PC-9 (cell line): ENCODE measurements at regions of chr22 and their contacts with region 1.

Region 1: DNA sequence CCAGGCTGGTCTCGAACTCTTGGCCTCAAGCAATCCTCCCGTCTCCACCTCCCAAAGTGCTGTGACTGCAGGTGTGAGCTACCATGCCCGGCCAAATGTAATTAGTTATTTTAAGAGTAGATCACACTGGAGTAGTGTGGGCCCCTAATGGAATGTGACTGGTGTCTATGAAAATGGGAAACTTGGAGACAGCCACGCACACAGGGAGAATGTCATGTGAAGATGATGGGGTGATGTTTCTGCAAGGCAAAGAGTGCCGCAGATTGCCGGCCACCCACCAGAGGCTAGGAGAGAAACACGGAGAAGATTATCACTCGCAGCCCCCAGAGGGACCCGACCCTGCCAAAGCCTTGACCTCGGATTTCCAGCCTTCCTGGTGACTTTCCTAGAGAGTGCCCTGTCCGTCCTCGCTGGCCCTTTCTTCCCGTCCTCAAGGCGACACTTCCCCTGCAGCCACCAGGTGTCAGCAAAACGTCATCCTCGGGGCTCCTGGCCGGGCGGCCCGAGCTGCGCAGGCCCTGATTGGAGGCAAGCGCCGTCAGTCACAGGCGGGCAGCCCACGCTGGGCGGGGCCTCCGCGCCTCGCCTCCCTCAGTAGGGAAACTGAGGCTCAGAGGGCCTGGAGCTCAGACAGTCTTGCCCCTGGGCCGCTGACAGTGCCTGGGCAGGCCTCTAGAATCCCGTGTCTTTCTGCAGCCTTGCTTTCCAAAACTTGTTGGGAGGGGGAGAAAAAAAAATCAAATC is 16.3 kb downstream of the CRYBB2 start:
- DNase-seq: peak; percentile 63 to 80
- H3K4me3 ChIP-seq: peak overlapping the region; percentile 27; the same call in 1 of the 2 replicates
- H3K27ac ChIP-seq: no peak overlapping the region
- H3K4me1 ChIP-seq: no peaks in the 10 kb centered on the region
- H3K27me3 ChIP-seq: peaks cover 26% of the 10 kb centered on the region
- CTCF ChIP-seq: peak; percentile 81

Region 2: GRCh38 chr22:25350551-25350971 is 114.8 kb after region 1 on chr22:
- CTCF ChIA-PET with region 1: no interaction called
- POLR2A ChIA-PET with region 1: no interaction called
- intact Hi-C with region 1: loop called (anchors 10 kb)
- DNase-seq: no peak
- H3K4me3 ChIP-seq: no peak overlapping the region
- H3K27ac ChIP-seq: no peak overlapping the region
- H3K4me1 ChIP-seq: no peaks in the 10 kb centered on the region
- H3K27me3 ChIP-seq: no peaks in the 10 kb centered on the region
- CTCF ChIP-seq: no peak

Region 3: GRCh38 chr22:25437414-25438160 is 201.9 kb after region 1 on chr22:
- CTCF ChIA-PET with region 1: no interaction called
- POLR2A ChIA-PET with region 1: no interaction called
- intact Hi-C with region 1: no loop called
- DNase-seq: no peak
- H3K4me3 ChIP-seq: no peak overlapping the region
- H3K27ac ChIP-seq: no peak overlapping the region
- H3K4me1 ChIP-seq: no peaks in the 10 kb centered on the region
- H3K27me3 ChIP-seq: no peaks in the 10 kb centered on the region
- CTCF ChIP-seq: no peak

Region 4: DNA sequence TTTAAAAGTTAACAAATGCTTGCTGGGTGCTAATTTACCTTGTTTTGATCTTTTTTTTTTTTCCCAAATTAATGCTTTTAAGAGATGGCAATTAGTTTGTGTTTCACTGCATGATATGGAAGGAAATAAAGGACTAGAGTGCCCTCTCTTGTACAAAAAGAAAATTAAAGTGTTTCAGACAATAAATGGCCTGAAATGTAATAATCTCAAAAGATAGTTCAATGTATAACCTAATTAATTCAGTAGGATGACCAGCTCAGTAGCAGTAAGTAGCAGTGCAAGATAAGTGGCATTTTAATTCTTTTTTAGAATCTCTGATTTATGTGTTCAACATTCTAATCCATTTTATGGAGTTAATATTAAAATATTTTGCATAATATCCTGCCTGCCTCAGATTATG is 466.3 kb after region 1 on chr22:
- CTCF ChIA-PET with region 1: no interaction called
- POLR2A ChIA-PET with region 1: no interaction called
- intact Hi-C with region 1: loop called (anchors 10 kb)
- DNase-seq: no peak
- H3K4me3 ChIP-seq: no peak overlapping the region
- H3K27ac ChIP-seq: no peak overlapping the region
- H3K4me1 ChIP-seq: no peaks in the 10 kb centered on the region
- H3K27me3 ChIP-seq: peaks cover 36% of the 10 kb centered on the region
- CTCF ChIP-seq: peak; percentile 55

Region 5: DNA sequence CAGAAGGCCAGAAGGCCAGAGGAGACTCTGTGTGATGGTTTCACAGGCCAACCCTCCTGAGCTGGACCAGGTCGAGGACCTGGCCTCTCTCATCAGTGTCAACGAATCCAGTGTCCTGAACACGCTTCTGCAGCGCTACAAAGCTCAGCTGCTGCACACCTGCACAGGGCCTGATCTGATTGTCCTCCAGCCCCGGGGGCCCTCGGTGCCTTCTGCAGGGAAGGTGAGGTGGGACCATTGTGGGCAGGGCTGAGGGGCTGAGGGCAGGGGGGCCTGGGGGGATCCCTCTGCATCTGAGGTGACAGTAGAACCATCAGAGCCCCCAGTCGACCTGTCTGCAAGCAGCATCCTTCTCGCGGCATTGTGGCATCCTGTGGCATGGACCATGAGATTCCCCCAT is 536.6 kb after region 1 on chr22:
- CTCF ChIA-PET with region 1: no interaction called
- POLR2A ChIA-PET with region 1: no interaction called
- intact Hi-C with region 1: loop called (anchors 2 kb)
- DNase-seq: no peak
- H3K4me3 ChIP-seq: no peak overlapping the region
- H3K27ac ChIP-seq: no peak overlapping the region
- H3K4me1 ChIP-seq: no peaks in the 10 kb centered on the region
- H3K27me3 ChIP-seq: peaks cover 43% of the 10 kb centered on the region
- CTCF ChIP-seq: no peak

Region 6: DNA sequence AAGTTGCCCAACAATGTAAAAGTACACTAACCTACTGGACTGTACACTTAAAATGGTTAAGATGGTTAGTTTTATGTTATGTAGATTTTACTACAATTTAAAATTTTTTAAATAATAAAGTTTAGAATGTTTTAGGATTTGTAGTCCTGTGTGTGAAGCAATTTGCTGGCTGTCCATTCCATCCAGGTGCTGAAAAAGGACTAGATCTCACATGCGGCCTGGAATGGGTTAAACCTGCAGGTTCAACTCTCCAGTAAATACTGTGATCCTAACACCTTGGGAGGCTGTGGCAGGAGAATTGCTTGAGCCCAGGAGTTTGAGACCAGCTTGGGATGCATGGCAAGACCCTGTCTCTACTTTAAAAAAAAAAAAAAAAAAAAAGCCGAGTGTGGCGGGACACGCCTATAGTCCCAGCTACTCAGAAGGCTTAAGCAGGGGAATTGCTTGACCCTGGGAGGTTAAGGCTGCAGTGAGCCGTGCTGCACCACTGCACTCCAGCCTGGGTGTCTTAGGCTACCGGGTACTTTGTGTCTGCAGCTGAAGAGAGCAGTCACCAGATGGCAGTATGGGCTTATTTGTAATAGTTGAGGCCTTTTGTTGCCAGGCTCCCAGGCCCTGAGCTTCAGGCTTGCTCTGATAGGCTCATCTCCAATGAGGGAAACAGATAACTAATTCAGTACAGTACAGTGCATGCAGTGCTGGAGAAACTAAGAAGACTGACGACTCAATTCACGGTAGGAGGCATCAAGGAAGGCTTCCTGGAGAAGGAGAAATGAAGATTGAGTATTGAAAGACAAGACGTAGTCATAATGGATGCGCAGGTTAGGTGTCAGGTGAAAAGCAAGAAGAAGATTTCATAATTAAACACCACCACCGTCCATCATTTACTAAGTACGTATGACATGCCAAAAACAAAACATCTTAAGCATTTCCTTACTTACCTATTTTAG is 1128.6 kb after region 1 on chr22:
- CTCF ChIA-PET with region 1: no interaction called
- POLR2A ChIA-PET with region 1: no interaction called
- intact Hi-C with region 1: loop called (anchors 10 kb)
- DNase-seq: peak; percentile 37 to 55
- H3K4me3 ChIP-seq: no peak overlapping the region
- H3K27ac ChIP-seq: no peak overlapping the region
- H3K4me1 ChIP-seq: no peaks in the 10 kb centered on the region
- H3K27me3 ChIP-seq: peaks cover 19% of the 10 kb centered on the region; the same call in 1 of the 2 replicates
- CTCF ChIP-seq: peak; percentile 65